ENCODE measurements at regions of chr1 and their contacts with region 1.

Region 1: DNA sequence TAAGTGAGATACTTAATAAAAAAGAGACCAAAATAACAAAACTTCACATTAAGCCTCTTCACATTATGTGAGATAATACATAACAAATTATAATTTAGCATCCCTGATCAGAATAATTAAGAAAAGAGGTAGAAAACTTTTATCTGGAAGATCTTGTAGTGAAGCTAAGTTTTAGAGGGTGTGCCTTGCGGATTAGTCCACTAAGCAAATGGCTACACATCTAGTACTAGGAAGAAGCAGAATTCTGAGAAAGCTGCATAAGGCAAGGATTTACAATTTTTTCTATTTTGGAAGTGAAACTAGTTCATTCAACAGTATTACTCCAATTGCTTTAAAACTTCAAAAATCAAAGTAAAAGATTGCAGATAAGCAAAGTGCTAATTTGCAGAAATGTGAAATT is 3.5 kb downstream of the YOD1 start:
- DNase-seq: no peak
- ATAC-seq: no peak
- H3K4me3 Mint-ChIP-seq: no peak overlapping the region
- H3K27ac Mint-ChIP-seq: no peak overlapping the region
- H3K4me1 Mint-ChIP-seq: peaks cover 44% of the 10 kb centered on the region
- H3K27me3 Mint-ChIP-seq: no peaks in the 10 kb centered on the region

Region 2: GRCh38 chr1:207069858-207070506 is 22.5 kb after region 1 on chr1:
- CTCF ChIA-PET with region 1: interaction called, 50 read pairs
- POLR2A ChIA-PET with region 1: interaction called, 3 read pairs
- DNase-seq: no peak
- ATAC-seq: peak; percentile 8
- H3K4me3 Mint-ChIP-seq: no peak overlapping the region
- H3K27ac Mint-ChIP-seq: peak overlapping the region; percentile 88
- H3K4me1 Mint-ChIP-seq: peaks cover 53% of the 10 kb centered on the region
- H3K27me3 Mint-ChIP-seq: no peaks in the 10 kb centered on the region

Measured in activated CD8-positive, alpha-beta T cell treated with anti-CD3 and anti-CD28 coated beads, Interleukin-2, amount 10 ng/mL, durations not matched to agents 7 days and 5 days (primary cell).